ENCODE measurements at regions of chr17 and their contacts with region 1.

Region 1: DNA sequence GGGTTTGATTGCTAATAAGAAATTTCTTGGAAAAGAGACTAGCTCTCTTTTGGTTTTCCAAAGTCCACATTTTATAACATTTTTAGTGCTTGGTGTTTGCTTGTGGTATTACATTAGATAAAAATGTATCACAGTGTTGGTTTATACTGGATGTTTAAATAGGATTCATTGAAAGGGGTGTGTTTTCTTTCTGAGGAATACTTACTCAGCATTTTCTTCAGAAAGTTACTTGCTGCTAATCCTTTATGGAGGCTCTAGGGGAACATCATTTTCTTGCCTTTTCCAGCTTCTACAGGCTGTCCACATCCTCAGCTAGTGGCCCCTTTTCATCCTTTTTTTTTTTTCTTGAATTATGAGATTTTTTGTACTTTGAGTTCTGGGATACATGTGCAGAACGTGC is 833 bp upstream of the KRT39 start:
- DNase-seq: no peak
- H3K4me3 ChIP-seq: no peak overlapping the region
- H3K27me3 ChIP-seq: no peaks in the 10 kb centered on the region
- CTCF ChIP-seq: no peak

Region 2: DNA sequence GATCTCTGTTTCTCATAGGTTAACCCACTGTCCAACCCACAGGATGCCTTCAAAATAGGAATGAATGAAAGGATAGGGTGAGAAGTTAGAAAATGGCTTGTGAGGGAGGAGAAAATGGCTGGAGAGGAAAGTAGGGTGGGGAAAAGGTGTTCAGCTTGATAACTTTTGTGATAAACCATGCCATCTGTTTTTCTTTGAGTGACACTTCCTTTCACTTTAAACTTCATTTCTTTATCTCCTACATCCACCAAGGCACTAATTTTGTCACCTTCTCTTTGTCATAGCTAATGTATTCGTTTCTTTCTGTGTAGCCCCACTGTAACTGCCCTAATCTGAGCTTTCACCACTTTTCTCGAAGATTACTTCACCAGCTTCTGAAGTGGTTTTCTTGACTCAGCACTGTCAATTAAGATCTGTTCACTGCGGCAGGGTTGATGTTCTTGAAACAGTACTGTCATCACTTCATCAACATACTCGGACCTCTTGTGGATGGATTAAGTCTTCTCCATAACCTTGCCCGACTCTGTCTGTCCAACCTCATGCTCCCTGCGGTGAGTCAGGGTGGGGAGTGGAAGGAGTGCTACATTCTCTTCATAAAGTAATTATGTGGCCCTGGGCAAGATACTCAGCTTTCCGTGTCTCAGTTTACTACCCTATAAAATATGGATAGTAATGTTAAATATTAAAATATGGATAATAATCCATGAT is 139.7 kb before region 1 on chr17:
- CTCF ChIA-PET with region 1: no interaction called
- POLR2A ChIA-PET with region 1: no interaction called
- DNase-seq: no peak
- H3K4me3 ChIP-seq: no peak overlapping the region
- H3K27me3 ChIP-seq: no peaks in the 10 kb centered on the region
- CTCF ChIP-seq: no peak

Region 3: GRCh38 chr17:40937384-40937819 is 30.2 kb before region 1 on chr17 and contains the start of gene KRT23:
- CTCF ChIA-PET with region 1: no interaction called
- POLR2A ChIA-PET with region 1: no interaction called
- DNase-seq: no peak
- H3K4me3 ChIP-seq: no peak within 1 kb of the TSS
- H3K27me3 ChIP-seq: no peaks in the 10 kb centered on the region
- CTCF ChIP-seq: no peak
- polyA plus RNA-seq, gene KRT23: 0.09 and 0.11 TPM in 2 replicates

Region 4: DNA sequence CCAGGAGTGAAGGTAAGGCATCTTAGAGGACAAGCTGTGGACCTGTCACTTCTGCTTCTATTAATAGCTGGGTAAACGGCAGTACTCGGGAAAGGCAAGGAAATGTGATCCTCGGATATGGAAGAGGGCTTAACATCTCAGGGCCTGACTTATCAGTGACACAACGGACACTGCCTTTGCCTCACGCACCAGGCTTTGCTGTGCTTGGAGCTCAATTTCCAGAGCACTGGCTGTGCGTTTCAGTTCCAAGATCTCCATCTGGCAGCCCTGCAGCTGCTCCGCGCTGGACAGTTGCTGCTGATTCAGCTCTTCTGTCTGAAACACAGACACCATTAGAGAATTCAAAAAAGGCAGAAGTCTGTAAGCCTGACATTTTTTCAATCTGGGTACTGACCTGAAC is 13.0 kb after region 1 on chr17:
- CTCF ChIA-PET with region 1: interaction called, 11 read pairs
- POLR2A ChIA-PET with region 1: no interaction called
- DNase-seq: no peak
- H3K4me3 ChIP-seq: no peak overlapping the region
- H3K27me3 ChIP-seq: no peaks in the 10 kb centered on the region
- CTCF ChIP-seq: no peak

Measured in BJ (cell line).